GM18951 (cell line): ENCODE measurements at regions of chr11 and their contacts with region 1.

Region 1: GRCh38 chr11:83819933-83820549 is 533.9 kb upstream of the CCDC90B start:
- POLR2A ChIP-seq: no peak

Region 2: DNA sequence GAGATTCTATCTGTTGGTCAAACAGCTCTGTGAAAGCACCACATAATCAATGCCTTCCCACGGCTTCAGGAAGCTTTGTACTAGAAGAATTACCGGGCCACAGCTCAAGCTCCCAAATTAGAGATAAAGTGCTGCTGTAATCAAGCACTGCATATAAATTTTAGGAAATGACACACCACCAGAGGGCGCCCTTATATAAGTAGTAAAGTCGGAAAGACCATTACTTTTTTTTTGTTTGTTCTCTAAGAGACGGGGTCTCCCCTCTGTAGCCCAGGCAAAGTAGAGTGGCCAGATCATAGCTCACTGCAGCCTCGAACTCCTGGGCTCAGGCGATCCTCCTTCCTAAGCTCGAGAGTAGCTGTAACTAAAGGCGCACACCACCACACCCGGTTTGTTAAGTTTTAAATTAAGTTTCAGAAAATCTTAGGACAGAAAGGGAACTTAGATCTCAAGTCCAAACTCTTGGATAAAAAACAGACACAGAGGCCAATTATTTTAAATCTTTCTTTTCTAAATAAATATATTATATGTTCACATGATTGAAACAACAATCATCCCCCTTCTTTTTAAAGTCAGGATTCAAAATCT is 952.5 kb before region 1 on chr11:
- in situ Hi-C with region 1: loop called (anchors 25 kb)
- POLR2A ChIP-seq: no peak

Region 3: GRCh38 chr11:83285771-83286528 is 534.1 kb before region 1 on chr11 and contains the start of gene CCDC90B:
- in situ Hi-C with region 1: loop called (anchors 25 kb)
- POLR2A ChIP-seq: peak; percentile 85

Region 4: GRCh38 chr11:83990160-83990733 is 170.2 kb after region 1 on chr11:
- in situ Hi-C with region 1: no loop called
- POLR2A ChIP-seq: no peak

Region 5: DNA sequence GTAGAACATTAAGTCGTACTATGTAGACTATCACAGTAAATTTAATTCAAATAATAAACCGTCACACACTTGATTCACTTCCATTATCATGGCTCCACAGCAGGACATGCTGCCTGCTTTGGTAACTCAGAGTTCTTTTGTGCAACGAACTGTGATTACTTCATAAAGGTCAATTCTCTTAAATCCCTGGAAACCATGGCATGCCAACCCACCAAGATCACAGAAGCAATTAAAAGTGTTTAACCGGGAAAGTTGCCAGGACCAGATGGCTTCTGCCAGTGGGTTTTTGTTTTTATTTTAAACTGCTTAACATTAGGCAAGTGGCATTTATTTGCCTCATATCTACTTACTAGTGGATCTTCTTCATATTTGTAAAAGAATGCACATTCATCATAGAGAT is 645.0 kb after region 1 on chr11:
- in situ Hi-C with region 1: no loop called
- POLR2A ChIP-seq: no peak